GM10248 (cell line): ENCODE measurements at regions of chr5 and their contacts with region 1.

Region 1: GRCh38 chr5:116681334-116682013 is 106.9 kb upstream of the SEMA6A start:
- DNase-seq: peak; percentile 77
- CTCF ChIP-seq: no peak

Region 2: GRCh38 chr5:116502651-116503095 is 178.8 kb before region 1 on chr5:
- CTCF ChIA-PET with region 1: no interaction called
- POLR2A ChIA-PET with region 1: no interaction called
- DNase-seq: no peak
- CTCF ChIP-seq: no peak

Region 3: GRCh38 chr5:116645627-116646026 is 35.8 kb before region 1 on chr5:
- CTCF ChIA-PET with region 1: no interaction called
- POLR2A ChIA-PET with region 1: no interaction called
- DNase-seq: no peak
- CTCF ChIP-seq: no peak

Region 4: GRCh38 chr5:116696366-116696765 is 14.9 kb after region 1 on chr5:
- CTCF ChIA-PET with region 1: interaction called, 11 read pairs
- POLR2A ChIA-PET with region 1: no interaction called
- DNase-seq: peak; percentile 60
- CTCF ChIP-seq: no peak

Region 5: GRCh38 chr5:116719106-116719505 is 37.6 kb after region 1 on chr5:
- CTCF ChIA-PET with region 1: no interaction called
- POLR2A ChIA-PET with region 1: no interaction called
- DNase-seq: no peak
- CTCF ChIP-seq: no peak

Region 6: GRCh38 chr5:116733991-116734975 is 52.8 kb after region 1 on chr5:
- CTCF ChIA-PET with region 1: no interaction called
- POLR2A ChIA-PET with region 1: no interaction called
- DNase-seq: no peak
- CTCF ChIP-seq: no peak